K562 (cell line): ENCODE measurements at regions of chr9 and their contacts with region 1.

Region 1: DNA sequence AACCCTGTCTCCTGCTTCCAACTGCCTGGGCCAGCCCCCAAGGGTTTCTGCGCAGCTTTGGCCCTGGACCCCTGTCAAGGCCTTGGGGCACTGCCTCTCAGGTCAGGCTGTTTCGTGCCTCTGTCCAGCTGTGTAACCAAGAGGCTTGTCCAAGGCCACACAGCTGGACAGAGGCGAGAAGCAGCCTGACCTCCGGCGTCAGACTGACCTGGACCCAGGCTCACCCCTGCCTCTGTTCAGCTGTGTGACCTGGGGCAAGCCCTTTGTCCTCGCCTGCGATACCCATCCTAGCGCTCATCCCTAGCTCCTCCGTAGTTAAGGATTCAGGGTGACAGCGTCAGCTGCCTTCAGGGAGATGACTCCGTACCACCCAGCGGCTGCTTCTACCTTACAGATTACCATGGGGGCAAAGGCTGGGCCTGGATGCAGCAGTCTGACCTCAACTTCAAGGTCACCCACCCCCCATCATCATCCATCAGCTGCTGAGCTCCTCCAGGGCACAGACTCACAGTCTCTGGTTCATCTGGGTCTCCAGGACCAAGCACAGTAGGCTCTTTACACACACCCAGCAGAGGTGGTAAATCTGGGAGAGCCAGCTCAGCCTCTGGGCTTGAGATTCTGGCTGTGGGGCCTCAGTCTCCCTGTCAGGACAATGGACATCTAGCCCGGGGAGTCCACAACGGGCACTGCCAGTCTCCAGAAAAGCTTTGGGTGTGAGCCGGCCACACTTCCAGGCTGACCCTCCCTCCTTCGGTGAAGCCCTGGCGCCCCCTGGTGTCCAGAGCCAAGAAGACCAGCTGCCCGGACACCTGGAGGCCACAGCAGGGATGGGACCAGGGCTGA is 7.9 kb downstream of the AK1 start:
- DNase-seq: peak; percentile 91 to 93 (median 92)
- ATAC-seq: peak; percentile 97
- H3K4me3 ChIP-seq: no peak overlapping the region
- H3K27ac ChIP-seq: no peak overlapping the region
- H3K4me1 ChIP-seq: peaks cover 17 to 69% of the 10 kb centered on the region in 2 experiments
- H3K27me3 ChIP-seq: no peaks in the 10 kb centered on the region
- CTCF ChIP-seq: peak; percentile 93 to 99 (median 97)
- EP300 ChIP-seq: 0 out of 2 replicates have a peak, but pooled peaks have one; percentile 16
- POLR2A ChIP-seq: no peak
- RAD21 ChIP-seq: peak; percentile 97 to 98

Region 2: GRCh38 chr9:127763918-127764384 is 105.6 kb before region 1 on chr9:
- CTCF ChIA-PET with region 1: no interaction called
- POLR2A ChIA-PET with region 1: interaction called, 5 read pairs
- in situ Hi-C with region 1: no loop called
- intact Hi-C with region 1: loop called (anchors 1 kb)
- DNase-seq: peak; percentile 48 to 85 (median 62)
- ATAC-seq: peak; percentile 96
- H3K4me3 ChIP-seq: no peak overlapping the region
- H3K27ac ChIP-seq: no peak overlapping the region
- H3K4me1 ChIP-seq: peaks cover 13 to 32% of the 10 kb centered on the region in 2 experiments
- H3K27me3 ChIP-seq: no peaks in the 10 kb centered on the region; a peak in 1 of 5 replicates
- CTCF ChIP-seq: peak; percentile 78 to 85 (median 84)
- EP300 ChIP-seq: no peak
- POLR2A ChIP-seq: no peak
- RAD21 ChIP-seq: peak; percentile 58 to 91

Region 3: DNA sequence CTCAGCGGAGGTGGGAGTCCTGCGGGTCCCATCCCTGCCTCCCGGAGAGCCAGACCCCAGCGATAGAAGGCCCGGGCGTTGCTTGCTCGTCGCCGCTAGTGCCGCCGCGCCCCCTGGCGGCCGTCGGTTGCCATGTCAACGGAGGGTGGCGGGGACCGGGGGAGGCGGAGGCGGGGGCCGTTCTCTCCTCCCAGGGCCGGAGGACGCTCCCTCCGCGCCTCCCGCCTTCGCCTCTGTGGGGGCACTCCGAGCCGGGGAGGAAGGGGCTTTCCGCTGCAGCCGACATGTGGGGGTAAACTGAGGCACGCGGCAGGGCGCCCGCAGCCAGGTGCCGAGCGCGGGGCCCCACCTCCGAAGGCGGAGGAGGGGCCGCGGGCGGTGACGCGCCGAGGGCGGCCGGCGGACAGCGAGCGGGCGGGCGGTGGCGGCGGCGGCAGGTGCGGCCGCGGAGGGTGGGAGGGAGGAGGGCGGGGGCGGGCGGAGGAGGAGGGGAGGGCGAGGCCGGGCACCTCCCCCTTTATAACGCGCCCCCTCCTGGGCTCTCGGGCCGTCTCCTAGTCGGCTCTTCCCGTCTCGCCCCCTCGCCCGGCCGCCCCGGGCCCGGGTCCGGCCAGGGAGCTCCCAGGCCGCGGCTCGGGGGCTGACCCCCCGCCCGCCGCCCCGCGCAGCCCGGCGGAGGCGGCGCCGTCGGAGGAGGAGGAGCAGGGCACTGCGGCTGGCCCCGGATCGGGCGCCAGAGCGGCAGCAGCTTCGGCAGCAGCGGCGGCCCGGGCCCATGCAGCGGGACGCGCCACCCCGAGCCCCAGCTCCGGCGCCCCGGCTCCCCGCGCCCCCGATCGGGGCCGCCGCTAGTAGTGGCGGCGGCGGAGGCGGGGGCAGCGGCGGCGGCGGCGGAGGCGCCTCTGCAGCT is 84.3 kb before region 1 on chr9:
- CTCF ChIA-PET with region 1: interaction called, 34 read pairs
- POLR2A ChIA-PET with region 1: interaction called, 4 read pairs
- in situ Hi-C with region 1: no loop called
- intact Hi-C with region 1: loop called (anchors 2 kb)
- DNase-seq: peak; percentile 88 to 94 (median 90)
- ATAC-seq: peak; percentile 74
- H3K4me3 ChIP-seq: peak overlapping the region; percentile 99
- H3K27ac ChIP-seq: peak overlapping the region; percentile 93
- H3K4me1 ChIP-seq: peaks cover 7 to 41% of the 10 kb centered on the region in 2 experiments; a peak in 4 of 5 replicates
- H3K27me3 ChIP-seq: no peaks in the 10 kb centered on the region
- CTCF ChIP-seq: peak; percentile 76 to 94 (median 86)
- EP300 ChIP-seq: no peak
- POLR2A ChIP-seq: no peak
- RAD21 ChIP-seq: peak; percentile 85 to 92

Region 4: DNA sequence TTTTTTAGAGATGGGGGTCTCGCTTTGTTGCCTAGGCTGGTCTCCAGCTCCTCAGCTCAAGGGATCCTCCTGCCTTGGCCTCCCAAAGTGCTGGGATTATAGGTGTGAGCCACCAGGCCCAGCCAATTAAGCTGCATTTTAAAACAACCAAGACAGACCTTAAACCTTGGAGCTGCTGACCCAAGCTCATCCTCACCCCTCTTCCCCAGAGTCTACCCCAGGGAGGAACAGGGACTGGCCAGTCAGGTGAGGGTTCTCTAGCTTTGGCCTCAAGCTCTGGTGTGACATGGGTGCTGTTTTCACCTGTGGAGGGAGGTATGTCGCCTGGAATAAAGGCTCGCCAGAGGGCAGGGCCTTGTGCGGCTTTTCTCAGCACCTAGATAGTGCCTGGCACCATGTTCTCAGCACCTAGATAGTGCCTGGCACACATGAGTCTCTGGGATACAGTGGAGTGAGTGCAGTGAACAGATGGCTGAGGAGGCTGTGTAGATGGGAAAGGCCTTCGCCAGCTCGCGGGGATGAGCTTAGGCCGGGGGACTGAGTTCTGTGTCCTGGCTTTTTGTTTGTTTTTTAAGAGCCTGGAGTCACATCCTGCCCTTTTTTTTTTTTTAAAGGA is 76.3 kb before region 1 on chr9:
- CTCF ChIA-PET with region 1: interaction called, 34 read pairs
- POLR2A ChIA-PET with region 1: interaction called, 14 read pairs
- in situ Hi-C with region 1: no loop called
- intact Hi-C with region 1: no loop called
- DNase-seq: peak in 1 of 4 experiments; percentile 15
- ATAC-seq: peak; percentile 39
- H3K4me3 ChIP-seq: no peak overlapping the region
- H3K27ac ChIP-seq: no peak overlapping the region
- H3K4me1 ChIP-seq: peaks cover 2 to 26% of the 10 kb centered on the region in 2 experiments; a peak in 4 of 5 replicates
- H3K27me3 ChIP-seq: no peaks in the 10 kb centered on the region
- CTCF ChIP-seq: no peak
- EP300 ChIP-seq: no peak
- POLR2A ChIP-seq: no peak
- RAD21 ChIP-seq: no peak

Region 5: DNA sequence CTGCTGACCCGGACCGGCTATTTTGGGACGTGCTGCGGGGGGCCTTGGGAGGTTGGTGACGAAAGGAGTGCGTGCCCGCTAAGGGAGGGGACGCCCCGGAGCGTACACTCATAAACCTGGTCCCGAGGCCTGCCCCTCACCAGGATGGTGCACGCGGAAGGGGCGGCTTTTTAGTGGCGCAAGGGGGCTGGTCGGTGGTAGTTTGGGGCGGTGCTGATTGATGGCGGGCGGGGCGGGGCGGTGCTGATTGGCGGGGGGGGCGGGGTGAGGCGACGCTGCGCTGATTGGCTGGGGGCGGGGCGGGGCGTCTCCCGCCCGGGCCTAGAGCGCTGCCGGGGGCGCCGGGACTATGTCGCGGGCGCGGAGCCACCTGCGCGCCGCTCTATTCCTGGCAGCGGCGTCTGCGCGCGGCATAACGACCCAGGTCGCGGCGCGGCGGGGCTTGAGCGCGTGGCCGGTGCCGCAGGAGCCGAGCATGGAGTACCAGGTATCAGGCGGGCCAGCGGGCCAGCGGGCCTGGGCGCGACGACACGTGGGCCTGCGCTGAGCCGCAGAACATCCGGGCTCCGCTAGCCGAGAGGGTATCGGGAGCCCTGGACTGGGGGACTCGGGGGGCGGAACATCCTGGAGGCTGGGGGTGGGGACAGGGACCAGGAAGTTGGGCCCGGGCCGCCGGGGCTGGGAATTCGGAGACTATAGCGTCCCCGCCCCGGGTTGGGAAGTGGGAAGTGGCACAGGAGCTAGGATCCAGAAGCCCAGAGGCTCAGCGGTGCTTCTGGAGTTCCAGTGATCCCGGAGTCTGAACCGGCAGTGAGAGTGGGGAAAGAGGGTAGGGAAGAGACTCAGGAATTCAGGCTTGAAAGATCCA is 66.7 kb before region 1 on chr9 and contains the start of gene FPGS:
- CTCF ChIA-PET with region 1: interaction called, 3 read pairs
- POLR2A ChIA-PET with region 1: no interaction called
- in situ Hi-C with region 1: loop called (anchors 5 kb)
- intact Hi-C with region 1: loop called (anchors 5 kb)
- DNase-seq: peak; percentile 88 to 98 (median 96)
- ATAC-seq: peak; percentile 92
- H3K4me3 ChIP-seq: peak within 1 kb of the TSS; percentile 97
- H3K27ac ChIP-seq: peak within 1 kb of the TSS; percentile 91
- H3K4me1 ChIP-seq: peaks cover 17 to 28% of the 10 kb centered on the region in 2 experiments; a peak in 4 of 5 replicates
- H3K27me3 ChIP-seq: no peaks in the 10 kb centered on the region
- CTCF ChIP-seq: no peak
- EP300 ChIP-seq: no peak
- POLR2A ChIP-seq: peak; percentile 91
- RAD21 ChIP-seq: 0 out of 4 replicates have a peak, but pooled peaks have one; percentile 0 to 2
- polyA plus RNA-seq, gene FPGS: 0.84 to 2.0 TPM

Region 6: GRCh38 chr9:127856035-127856812 is 13.3 kb before region 1 on chr9:
- CTCF ChIA-PET with region 1: no interaction called
- POLR2A ChIA-PET with region 1: no interaction called
- in situ Hi-C with region 1: no loop called
- intact Hi-C with region 1: no loop called
- DNase-seq: no peak
- ATAC-seq: peak; percentile 46
- H3K4me3 ChIP-seq: no peak overlapping the region
- H3K27ac ChIP-seq: peak overlapping the region; percentile 42; the same call in 1 of the 3 replicates
- H3K4me1 ChIP-seq: peaks cover 31 to 62% of the 10 kb centered on the region in 2 experiments
- H3K27me3 ChIP-seq: no peaks in the 10 kb centered on the region
- CTCF ChIP-seq: no peak
- EP300 ChIP-seq: no peak
- POLR2A ChIP-seq: no peak
- RAD21 ChIP-seq: no peak

Region 7: DNA sequence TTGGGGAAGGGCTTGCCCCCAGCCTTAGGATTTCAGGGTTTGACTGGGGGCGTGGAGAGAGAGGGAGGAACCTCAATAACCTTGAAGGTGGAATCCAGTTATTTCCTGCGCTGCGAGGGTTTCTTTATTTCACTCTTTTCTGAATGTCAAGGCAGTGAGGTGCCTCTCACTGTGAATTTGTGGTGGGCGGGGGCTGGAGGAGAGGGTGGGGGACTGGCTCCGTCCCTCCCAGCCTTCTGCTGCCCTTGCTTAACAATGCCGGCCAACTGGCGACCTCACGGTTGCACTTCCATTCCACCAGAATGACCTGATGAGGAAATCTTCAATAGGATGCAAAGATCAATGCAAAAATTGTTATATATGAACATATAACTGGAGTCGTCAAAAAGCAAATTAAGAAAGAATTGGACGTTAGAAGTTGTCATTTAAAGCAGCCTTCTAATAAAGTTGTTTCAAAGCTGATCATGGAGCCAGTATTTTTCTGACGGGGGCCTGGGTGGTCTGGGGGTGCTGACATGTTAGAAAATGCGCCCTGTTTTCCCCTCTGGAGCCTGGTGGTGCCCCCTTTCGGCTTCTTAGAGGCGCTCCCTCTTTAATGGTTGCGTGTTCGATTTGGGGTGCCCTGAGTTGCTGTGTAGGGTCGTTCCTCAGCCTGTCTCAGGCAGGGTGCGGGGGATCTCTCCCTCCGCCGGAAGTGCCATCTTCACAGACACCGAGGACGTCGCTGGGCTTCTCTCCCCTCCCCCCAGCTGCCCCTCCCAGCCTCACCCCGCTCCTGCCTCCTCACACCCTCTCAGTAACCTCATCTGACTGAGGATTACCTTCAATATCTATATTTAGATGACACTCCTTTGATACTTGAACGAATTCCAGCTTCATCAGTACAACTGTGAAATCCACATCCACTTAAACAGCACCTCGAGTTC is 239.5 kb after region 1 on chr9:
- CTCF ChIA-PET with region 1: no interaction called
- POLR2A ChIA-PET with region 1: no interaction called
- in situ Hi-C with region 1: no loop called
- intact Hi-C with region 1: no loop called
- DNase-seq: no peak
- ATAC-seq: peak; percentile 56
- H3K4me3 ChIP-seq: no peak overlapping the region
- H3K27ac ChIP-seq: peak overlapping the region; percentile 56; the same call in 2 of the 3 replicates
- H3K4me1 ChIP-seq: peaks cover 11 to 49% of the 10 kb centered on the region in 2 experiments; a peak in 4 of 5 replicates
- H3K27me3 ChIP-seq: no peaks in the 10 kb centered on the region
- CTCF ChIP-seq: no peak
- EP300 ChIP-seq: no peak
- POLR2A ChIP-seq: no peak
- RAD21 ChIP-seq: no peak

Region 8: GRCh38 chr9:128370826-128371621 is 501.5 kb after region 1 on chr9 and contains the start of gene URM1:
- CTCF ChIA-PET with region 1: no interaction called
- POLR2A ChIA-PET with region 1: no interaction called
- in situ Hi-C with region 1: no loop called
- intact Hi-C with region 1: no loop called
- DNase-seq: peak; percentile 94 to 98 (median 96)
- ATAC-seq: peak; percentile 98
- H3K4me3 ChIP-seq: peak within 1 kb of the TSS; percentile 84
- H3K27ac ChIP-seq: peak within 1 kb of the TSS; percentile 77
- H3K4me1 ChIP-seq: peaks cover 13 to 14% of the 10 kb centered on the region in 2 experiments
- H3K27me3 ChIP-seq: no peaks in the 10 kb centered on the region
- CTCF ChIP-seq: no peak
- EP300 ChIP-seq: no peak
- POLR2A ChIP-seq: peak; percentile 81
- RAD21 ChIP-seq: no peak
- polyA plus RNA-seq, gene URM1: 10.1 to 24.7 TPM